CD8-positive, alpha-beta memory T cell (primary cell): ENCODE measurements at regions of chr5 and their contacts with region 1.

Region 1: DNA sequence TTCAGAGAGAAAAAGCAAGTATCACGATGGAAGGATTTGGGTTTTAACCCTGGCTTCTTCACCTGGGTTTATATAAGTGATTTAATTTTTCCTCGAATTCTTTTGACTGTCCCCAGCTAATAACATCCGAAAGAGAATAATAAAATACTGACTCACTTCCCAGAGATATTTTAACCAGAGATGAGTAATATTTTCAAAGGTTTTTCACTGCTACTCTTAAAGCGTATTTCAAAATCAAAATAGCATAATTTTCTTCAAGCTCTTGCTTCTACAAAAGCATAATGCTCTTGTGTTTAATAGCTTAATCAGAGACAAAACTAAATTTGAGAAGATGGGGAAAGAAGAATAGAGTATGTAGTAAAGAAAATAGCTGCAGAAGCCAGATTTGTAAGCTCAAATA is 215.2 kb upstream of the PTGER4 start:
- DNase-seq: no peak
- H3K4me3 ChIP-seq: no peak overlapping the region
- H3K4me3 Mint-ChIP-seq: no peak overlapping the region
- H3K27ac ChIP-seq: no peak overlapping the region
- H3K27ac Mint-ChIP-seq: no peak overlapping the region
- H3K4me1 ChIP-seq: no peaks in the 10 kb centered on the region
- H3K4me1 Mint-ChIP-seq: no peaks in the 10 kb centered on the region
- H3K27me3 ChIP-seq: no peaks in the 10 kb centered on the region
- H3K27me3 Mint-ChIP-seq: peaks cover 0 to 4% of the 10 kb centered on the region in 2 donors

Region 2: GRCh38 chr5:40428126-40428525 is 36.4 kb before region 1 on chr5:
- CTCF ChIA-PET with region 1: no interaction called
- POLR2A ChIA-PET with region 1: interaction called, 12 read pairs
- DNase-seq: no peak
- H3K4me3 ChIP-seq: no peak overlapping the region
- H3K4me3 Mint-ChIP-seq: no peak overlapping the region
- H3K27ac ChIP-seq: no peak overlapping the region
- H3K27ac Mint-ChIP-seq: peak overlapping the region in 5 of 8 donors; percentile 5 to 79 (median 72)
- H3K4me1 ChIP-seq: peaks cover 10% of the 10 kb centered on the region
- H3K4me1 Mint-ChIP-seq: peaks cover 26 to 45% (median 32%) of the 10 kb centered on the region in 3 donors
- H3K27me3 ChIP-seq: no peaks in the 10 kb centered on the region
- H3K27me3 Mint-ChIP-seq: no peaks in the 10 kb centered on the region